Activated CD4-positive, alpha-beta memory T cell treated with anti-CD3 and anti-CD28 coated beads for 36 hours (primary cell): ENCODE measurements at regions of chr2 and their contacts with region 1.

Region 1: GRCh38 chr2:168246483-168247340 is 683 bp downstream of the STK39 start:
- DNase-seq: peak; percentile 83
- H3K4me3 Mint-ChIP-seq: peak overlapping the region; percentile 93
- H3K27ac Mint-ChIP-seq: peak overlapping the region; percentile 89
- H3K4me1 Mint-ChIP-seq: peaks cover 38% of the 10 kb centered on the region
- H3K27me3 Mint-ChIP-seq: no peaks in the 10 kb centered on the region

Region 2: DNA sequence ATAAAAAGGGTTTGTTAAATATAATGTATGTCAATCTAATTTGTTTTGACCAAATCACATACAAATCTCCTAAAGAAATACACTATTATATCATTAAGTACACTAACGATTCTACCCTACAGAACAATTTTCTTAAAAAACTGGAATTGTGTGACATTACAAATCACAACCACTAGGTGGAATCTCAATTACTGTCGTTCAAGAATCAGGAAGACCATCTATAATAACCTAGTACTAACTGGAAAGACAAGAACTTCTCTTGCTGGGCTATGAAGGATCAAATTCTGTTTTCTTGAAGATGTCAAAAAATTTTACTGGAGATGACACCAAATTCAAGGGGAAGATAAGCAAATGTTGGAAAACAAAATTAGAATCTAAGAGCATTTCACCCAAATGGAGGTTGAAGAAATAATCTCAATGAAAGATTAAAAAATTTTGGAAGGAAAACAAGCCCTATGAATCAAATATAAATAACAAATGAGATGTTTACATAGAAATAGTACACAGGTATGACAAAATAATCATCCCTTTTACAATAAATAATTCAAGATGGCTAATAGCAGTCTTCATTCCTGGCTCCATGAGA is 110.2 kb before region 1 on chr2:
- CTCF ChIA-PET with region 1: interaction called, 4 read pairs
- POLR2A ChIA-PET with region 1: no interaction called
- intact Hi-C with region 1: loop called (anchors 1 kb)
- DNase-seq: no peak
- H3K4me3 Mint-ChIP-seq: no peak overlapping the region
- H3K27ac Mint-ChIP-seq: no peak overlapping the region
- H3K4me1 Mint-ChIP-seq: peaks cover 19% of the 10 kb centered on the region
- H3K27me3 Mint-ChIP-seq: no peaks in the 10 kb centered on the region

Region 3: DNA sequence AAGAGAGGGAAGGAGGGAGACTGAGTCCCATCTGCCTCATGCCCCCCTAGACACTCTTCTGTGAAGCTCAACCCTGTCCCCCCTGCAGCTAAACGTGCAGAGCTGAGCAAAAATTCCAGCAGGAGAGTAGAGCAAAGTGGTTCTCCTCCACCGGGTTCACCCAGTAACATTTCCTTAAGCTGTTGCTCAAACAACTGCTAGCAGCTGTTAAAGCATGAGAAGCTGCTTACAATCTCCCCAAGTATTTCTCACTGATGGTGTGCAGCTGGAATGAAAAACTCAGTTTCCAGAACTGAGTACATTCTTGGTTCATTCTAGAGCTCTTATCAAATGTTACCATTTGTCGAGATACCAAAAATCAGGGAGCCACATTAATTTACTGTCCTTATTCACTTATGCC is 91.7 kb before region 1 on chr2:
- CTCF ChIA-PET with region 1: no interaction called
- POLR2A ChIA-PET with region 1: no interaction called
- intact Hi-C with region 1: no loop called
- DNase-seq: no peak
- H3K4me3 Mint-ChIP-seq: no peak overlapping the region
- H3K27ac Mint-ChIP-seq: no peak overlapping the region
- H3K4me1 Mint-ChIP-seq: peaks cover 26% of the 10 kb centered on the region
- H3K27me3 Mint-ChIP-seq: no peaks in the 10 kb centered on the region

Region 4: DNA sequence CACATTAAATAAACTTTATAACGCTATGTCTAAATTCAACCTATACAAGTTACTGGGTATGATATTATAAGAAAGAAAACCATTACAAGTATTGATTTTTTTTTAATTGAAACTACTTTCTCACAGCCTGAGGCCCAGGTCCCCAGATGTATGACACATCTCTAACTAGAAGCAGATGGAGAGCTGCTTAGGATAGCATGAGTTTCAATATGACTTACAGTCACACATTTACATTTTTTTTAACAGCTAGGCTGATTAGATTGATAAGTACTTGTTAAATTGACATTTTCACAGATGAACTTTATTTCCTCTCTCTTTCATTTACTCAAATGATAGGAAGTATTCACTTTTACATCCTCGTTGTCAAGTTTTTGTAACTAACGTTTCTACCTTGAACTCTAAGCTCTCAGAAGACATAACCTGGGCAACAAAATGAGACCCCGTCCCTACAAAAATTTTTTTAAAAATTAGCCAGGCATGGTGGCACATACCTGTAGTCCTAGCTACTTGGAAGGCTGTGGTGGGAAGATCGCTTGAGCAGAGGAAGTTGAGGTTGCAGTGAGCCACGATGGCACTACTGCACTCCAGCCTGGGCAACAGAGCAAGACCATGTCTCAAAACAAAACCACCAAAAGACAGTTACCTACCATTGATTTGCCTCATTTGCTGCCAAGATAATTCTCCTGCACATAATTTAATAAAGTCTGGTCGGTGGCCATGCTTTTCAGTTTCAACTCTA is 51.8 kb before region 1 on chr2:
- CTCF ChIA-PET with region 1: interaction called, 5 read pairs
- POLR2A ChIA-PET with region 1: interaction called, 6 read pairs
- intact Hi-C with region 1: loop called (anchors 1 kb)
- DNase-seq: peak; percentile 55
- H3K4me3 Mint-ChIP-seq: peak overlapping the region; percentile 66
- H3K27ac Mint-ChIP-seq: peak overlapping the region; percentile 95
- H3K4me1 Mint-ChIP-seq: peaks cover 85% of the 10 kb centered on the region
- H3K27me3 Mint-ChIP-seq: no peaks in the 10 kb centered on the region

Region 5: GRCh38 chr2:168224346-168224745 is 22.4 kb before region 1 on chr2:
- CTCF ChIA-PET with region 1: no interaction called
- POLR2A ChIA-PET with region 1: no interaction called
- intact Hi-C with region 1: loop called (anchors 1 kb)
- DNase-seq: no peak
- H3K4me3 Mint-ChIP-seq: no peak overlapping the region
- H3K27ac Mint-ChIP-seq: no peak overlapping the region
- H3K4me1 Mint-ChIP-seq: peaks cover 53% of the 10 kb centered on the region
- H3K27me3 Mint-ChIP-seq: no peaks in the 10 kb centered on the region

Region 6: GRCh38 chr2:168323529-168324021 is 76.9 kb after region 1 on chr2:
- CTCF ChIA-PET with region 1: no interaction called
- POLR2A ChIA-PET with region 1: no interaction called
- intact Hi-C with region 1: loop called (anchors 5 kb)
- DNase-seq: peak; percentile 17
- H3K4me3 Mint-ChIP-seq: no peak overlapping the region
- H3K27ac Mint-ChIP-seq: no peak overlapping the region
- H3K4me1 Mint-ChIP-seq: peaks cover 12% of the 10 kb centered on the region
- H3K27me3 Mint-ChIP-seq: peaks cover 30% of the 10 kb centered on the region

Region 7: GRCh38 chr2:168455648-168456520 is 209.2 kb after region 1 on chr2 and contains the start of gene CERS6:
- CTCF ChIA-PET with region 1: no interaction called
- POLR2A ChIA-PET with region 1: no interaction called
- intact Hi-C with region 1: loop called (anchors 2 kb)
- DNase-seq: peak; percentile 93
- H3K4me3 Mint-ChIP-seq: no peak within 1 kb of the TSS
- H3K27ac Mint-ChIP-seq: peak within 1 kb of the TSS; percentile 31
- H3K4me1 Mint-ChIP-seq: peaks cover 28% of the 10 kb centered on the region
- H3K27me3 Mint-ChIP-seq: no peaks in the 10 kb centered on the region
- total RNA-seq, gene CERS6: 8.9 to 9.2 TPM